ENCODE measurements at regions of chr1 and their contacts with region 1.

Region 1: GRCh38 chr1:150567717-150568593 is 11.5 kb downstream of the MCL1 start:
- DNase-seq: peak; percentile 72
- ATAC-seq: peak; percentile 10
- H3K4me3 Mint-ChIP-seq: peak overlapping the region; percentile 81
- H3K27ac Mint-ChIP-seq: peak overlapping the region; percentile 96
- H3K4me1 Mint-ChIP-seq: peaks cover 72% of the 10 kb centered on the region
- H3K27me3 Mint-ChIP-seq: no peaks in the 10 kb centered on the region

Region 2: GRCh38 chr1:150613061-150613920 is 45.3 kb after region 1 on chr1:
- POLR2A ChIA-PET with region 1: interaction called, 71 read pairs
- DNase-seq: no peak
- ATAC-seq: peak; percentile 48
- H3K4me3 Mint-ChIP-seq: peak overlapping the region; percentile 55
- H3K27ac Mint-ChIP-seq: peak overlapping the region; percentile 83
- H3K4me1 Mint-ChIP-seq: peaks cover 49% of the 10 kb centered on the region
- H3K27me3 Mint-ChIP-seq: no peaks in the 10 kb centered on the region

Region 3: GRCh38 chr1:150621497-150622302 is 53.7 kb after region 1 on chr1:
- POLR2A ChIA-PET with region 1: interaction called, 71 read pairs
- DNase-seq: peak; percentile 52
- ATAC-seq: peak; percentile 45
- H3K4me3 Mint-ChIP-seq: no peak overlapping the region
- H3K27ac Mint-ChIP-seq: peak overlapping the region; percentile 81
- H3K4me1 Mint-ChIP-seq: peaks cover 34% of the 10 kb centered on the region
- H3K27me3 Mint-ChIP-seq: no peaks in the 10 kb centered on the region